Body of pancreas (tissue), 4 donors: ENCODE measurements at regions of chr11 and their contacts with region 1.

Region 1: DNA sequence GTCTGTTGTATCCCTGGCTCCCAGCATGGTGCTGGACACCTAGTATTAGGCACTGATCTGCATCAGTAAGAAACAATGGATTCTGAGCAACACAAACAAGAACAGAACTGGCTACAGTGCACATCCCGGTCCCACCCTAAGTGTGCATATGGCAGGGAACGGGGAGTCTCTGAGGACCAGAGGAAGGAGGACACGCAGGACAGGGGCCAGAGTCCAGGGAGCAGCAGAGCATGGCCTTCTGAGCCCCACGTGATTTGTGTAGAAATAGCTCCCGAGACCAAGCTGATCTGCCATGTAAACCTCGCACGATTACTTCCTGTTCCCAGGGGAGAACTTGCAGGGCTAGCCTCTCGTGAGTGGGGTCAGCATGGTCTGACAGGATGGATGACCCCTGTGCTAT is 12.6 kb upstream of the SNX32 start:
- DNase-seq: peak in 2 of 4 donors; percentile 17 to 37
- ATAC-seq: no peak
- H3K4me3 ChIP-seq: no peak overlapping the region
- H3K27ac ChIP-seq: peak overlapping the region in 3 of 4 donors; percentile 25 to 36 (median 29)
- H3K4me1 ChIP-seq: peaks cover 37% of the 10 kb centered on the region
- H3K27me3 ChIP-seq: no peaks in the 10 kb centered on the region
- CTCF ChIP-seq: no peak
- POLR2A ChIP-seq: no peak

Region 2: GRCh38 chr11:65719887-65720236 is 101.3 kb before region 1 on chr11:
- intact Hi-C with region 1: loop called (anchors 5 kb)
- DNase-seq: no peak
- ATAC-seq: no peak
- H3K4me3 ChIP-seq: peak overlapping the region; percentile 69 to 82
- H3K27ac ChIP-seq: peak overlapping the region; percentile 69 to 90 (median 73)
- H3K4me1 ChIP-seq: peaks cover 22% of the 10 kb centered on the region
- H3K27me3 ChIP-seq: no peaks in the 10 kb centered on the region
- CTCF ChIP-seq: no peak
- POLR2A ChIP-seq: no peak

Region 3: DNA sequence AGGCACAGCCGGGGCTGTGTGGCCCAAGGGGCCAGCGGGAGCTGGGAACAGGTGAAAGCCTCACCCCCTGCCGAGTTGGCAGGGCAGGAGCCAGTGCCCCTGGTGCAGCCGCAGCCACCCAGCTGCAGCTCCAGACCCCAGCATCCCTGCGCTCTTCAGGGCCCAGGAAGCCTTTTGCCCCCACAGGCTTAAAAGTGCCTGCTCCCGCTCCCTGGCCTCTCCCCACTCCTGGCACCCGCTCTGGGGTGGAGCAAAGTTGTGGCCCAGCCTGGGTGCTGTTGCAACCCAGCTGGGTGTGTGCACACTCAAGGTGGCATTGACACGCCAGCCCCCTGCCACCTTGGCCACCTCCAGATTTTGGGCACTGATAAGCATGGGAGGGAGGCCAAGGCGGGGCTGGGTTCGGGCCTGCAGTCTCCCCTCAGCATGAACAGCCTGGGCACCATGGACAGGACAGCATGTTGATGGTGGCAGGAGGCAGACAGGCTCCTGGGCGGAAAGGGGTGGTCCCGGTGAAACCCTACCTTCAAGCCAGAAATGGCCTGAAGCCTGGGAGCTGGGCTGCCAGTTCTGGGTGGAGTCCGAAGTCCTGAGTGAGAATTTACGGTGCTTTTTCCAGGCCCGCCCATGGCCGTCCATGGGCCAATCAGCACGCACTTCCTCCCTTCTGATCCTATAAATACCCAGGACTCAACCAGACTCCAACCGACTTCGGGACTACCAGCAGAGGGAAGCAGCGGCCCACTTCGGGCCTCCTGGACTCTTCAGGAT is 77.0 kb before region 1 on chr11:
- intact Hi-C with region 1: no loop called
- DNase-seq: peak; percentile 61 to 80 (median 74)
- ATAC-seq: peak; percentile 97
- H3K4me3 ChIP-seq: no peak overlapping the region
- H3K27ac ChIP-seq: no peak overlapping the region
- H3K4me1 ChIP-seq: peaks cover 8% of the 10 kb centered on the region
- H3K27me3 ChIP-seq: no peaks in the 10 kb centered on the region
- CTCF ChIP-seq: peak; percentile 35 to 85 (median 68)
- POLR2A ChIP-seq: peak in 2 of 3 donors; percentile 11 to 23